Heart right ventricle (tissue), 16 donors: ENCODE measurements at regions of chr5 and their contacts with region 1.

Region 1: GRCh38 chr5:88634014-88634413 is 249.0 kb downstream of the MEF2C start:
- DNase-seq: no peak
- ATAC-seq: no peak
- H3K4me3 ChIP-seq: no peak overlapping the region
- H3K27ac ChIP-seq: no peak overlapping the region
- H3K4me1 ChIP-seq: no peaks in the 10 kb centered on the region
- H3K27me3 ChIP-seq: peaks cover 0 to 28% (median 0%) of the 10 kb centered on the region in 7 donors
- CTCF ChIP-seq: no peak

Region 2: GRCh38 chr5:88021141-88021540 is 612.9 kb before region 1 on chr5:
- intact Hi-C with region 1: loop called in 1 of 10 experiments (anchors 5 kb)
- DNase-seq: no peak
- ATAC-seq: no peak
- H3K4me3 ChIP-seq: no peak overlapping the region
- H3K27ac ChIP-seq: no peak overlapping the region
- H3K4me1 ChIP-seq: no peaks in the 10 kb centered on the region
- H3K27me3 ChIP-seq: no peaks in the 10 kb centered on the region
- CTCF ChIP-seq: no peak

Region 3: GRCh38 chr5:88398316-88398715 is 235.7 kb before region 1 on chr5:
- intact Hi-C with region 1: no loop called
- DNase-seq: no peak
- ATAC-seq: no peak
- H3K4me3 ChIP-seq: peak overlapping the region in 3 of 10 donors; percentile 32 to 36 (median 36)
- H3K27ac ChIP-seq: no peak overlapping the region
- H3K4me1 ChIP-seq: peaks cover 0 to 9% (median 0%) of the 10 kb centered on the region in 9 donors
- H3K27me3 ChIP-seq: no peaks in the 10 kb centered on the region
- CTCF ChIP-seq: no peak

Region 4: GRCh38 chr5:88756953-88757352 is 122.9 kb after region 1 on chr5:
- intact Hi-C with region 1: no loop called
- DNase-seq: no peak
- ATAC-seq: no peak
- H3K4me3 ChIP-seq: no peak overlapping the region
- H3K27ac ChIP-seq: no peak overlapping the region
- H3K4me1 ChIP-seq: peaks cover 0 to 28% (median 9%) of the 10 kb centered on the region in 9 donors
- H3K27me3 ChIP-seq: no peaks in the 10 kb centered on the region
- CTCF ChIP-seq: no peak

Region 5: GRCh38 chr5:88952344-88952743 is 318.3 kb after region 1 on chr5:
- intact Hi-C with region 1: no loop called
- DNase-seq: no peak
- ATAC-seq: peak in 1 of 8 donors; percentile 19
- H3K4me3 ChIP-seq: no peak overlapping the region
- H3K27ac ChIP-seq: no peak overlapping the region
- H3K4me1 ChIP-seq: peaks cover 0 to 26% (median 6%) of the 10 kb centered on the region in 9 donors
- H3K27me3 ChIP-seq: no peaks in the 10 kb centered on the region
- CTCF ChIP-seq: no peak